Activated CD4-positive, alpha-beta T cell treated with anti-CD3 and anti-CD28 coated beads, Interleukin-2, amount 10 ng/mL, durations not matched to agents 24 days and 14 days (primary cell): ENCODE measurements at regions of chr1 and their contacts with region 1.

Region 1: DNA sequence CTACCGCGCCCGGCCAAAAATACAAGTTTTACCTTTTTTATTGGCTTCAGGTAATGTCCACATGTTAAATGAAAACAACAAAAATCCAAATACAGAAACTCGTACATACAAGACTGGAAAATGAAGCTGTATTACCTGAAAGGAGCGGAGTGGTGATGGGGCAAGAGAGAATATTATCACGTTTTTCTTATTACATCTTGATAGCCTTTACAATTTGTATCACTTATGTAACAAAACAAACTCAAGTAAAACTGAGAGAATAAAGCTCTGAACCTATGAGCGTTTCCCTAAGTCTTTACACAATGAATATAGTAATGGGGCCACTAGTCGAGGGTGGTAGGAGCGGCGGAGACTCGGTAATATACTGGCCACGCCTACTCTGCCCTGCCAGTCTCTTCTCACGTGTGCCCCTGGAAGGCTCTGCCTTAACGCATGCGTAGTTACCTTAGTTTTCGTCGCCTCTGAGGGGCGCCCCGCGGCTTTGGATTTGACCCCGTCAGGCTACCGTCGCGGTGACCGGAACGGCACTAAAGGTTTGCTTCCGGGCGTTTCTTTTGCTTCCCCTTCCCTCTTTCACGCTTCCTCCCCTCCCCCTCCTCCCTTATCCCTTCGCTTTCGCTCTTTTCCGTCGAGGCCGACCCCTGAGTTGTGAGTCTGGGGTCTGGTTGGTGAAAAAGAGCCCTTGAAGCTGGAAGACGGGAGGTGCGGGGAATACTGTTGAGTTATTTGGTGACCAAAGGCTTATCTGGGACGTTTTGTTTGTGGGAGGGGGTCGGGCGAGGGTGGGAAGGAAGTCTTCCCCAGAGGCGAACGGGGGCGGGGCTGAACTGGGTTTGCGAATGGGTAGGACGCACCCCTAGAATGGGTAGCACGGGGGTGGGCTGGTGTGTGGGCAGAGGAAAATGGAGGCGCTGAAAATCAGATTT is at the start of gene SETDB1:
- DNase-seq: peak; percentile 97
- H3K4me3 Mint-ChIP-seq: peak within 1 kb of the TSS; percentile 93
- H3K27ac Mint-ChIP-seq: peak within 1 kb of the TSS; percentile 97
- H3K4me1 Mint-ChIP-seq: peaks cover 28% of the 10 kb centered on the region
- H3K27me3 Mint-ChIP-seq: no peaks in the 10 kb centered on the region
- total RNA-seq, gene SETDB1: 56.2 and 62.3 TPM in 2 replicates

Region 2: GRCh38 chr1:150696590-150697524 is 229.2 kb before region 1 on chr1 and contains the start of gene GOLPH3L:
- intact Hi-C with region 1: loop called (anchors 2 kb)
- DNase-seq: peak; percentile 97
- H3K4me3 Mint-ChIP-seq: peak within 1 kb of the TSS; percentile 90
- H3K27ac Mint-ChIP-seq: peak within 1 kb of the TSS; percentile 92
- H3K4me1 Mint-ChIP-seq: peaks cover 19% of the 10 kb centered on the region
- H3K27me3 Mint-ChIP-seq: peaks cover 11% of the 10 kb centered on the region
- total RNA-seq, gene GOLPH3L: 19.6 and 19.8 TPM in 2 replicates

Region 3: DNA sequence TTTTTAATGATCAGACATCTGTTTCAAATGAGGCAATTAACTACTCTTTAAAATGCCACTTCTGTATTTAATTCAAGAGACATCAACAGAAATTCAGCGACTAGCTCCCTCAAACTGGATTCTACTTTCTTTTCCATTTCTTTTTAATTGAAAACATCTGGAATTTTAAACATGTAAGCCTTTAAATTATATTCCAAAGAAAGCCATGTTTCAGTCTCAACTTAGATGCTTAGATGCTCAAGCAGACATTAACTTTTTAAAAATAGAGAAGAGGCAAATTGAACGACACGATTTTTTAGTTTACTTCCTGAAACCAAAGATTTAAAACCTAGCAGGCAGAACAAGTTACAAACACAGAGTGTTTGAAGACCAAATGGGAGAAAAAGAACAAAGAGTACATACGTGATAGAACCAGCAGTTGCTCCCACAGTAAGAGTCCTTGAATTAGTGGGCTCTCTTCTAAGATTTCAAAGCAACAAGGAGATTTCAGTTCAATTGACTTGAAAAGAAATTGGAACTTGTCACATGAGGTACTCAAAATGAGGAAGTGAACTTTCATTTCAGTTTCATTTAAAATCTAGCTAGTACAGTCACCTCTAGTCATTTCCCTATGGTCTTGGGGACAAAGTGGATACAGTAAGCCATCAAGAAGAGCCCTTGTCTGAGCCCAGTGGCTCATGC is 160.6 kb before region 1 on chr1 and contains the start of gene CTSS:
- intact Hi-C with region 1: loop called (anchors 1 kb)
- DNase-seq: peak; percentile 70
- H3K4me3 Mint-ChIP-seq: peak within 1 kb of the TSS; percentile 83
- H3K27ac Mint-ChIP-seq: peak within 1 kb of the TSS; percentile 91
- H3K4me1 Mint-ChIP-seq: peaks cover 30% of the 10 kb centered on the region
- H3K27me3 Mint-ChIP-seq: no peaks in the 10 kb centered on the region
- total RNA-seq, gene CTSS: 26.9 and 28.3 TPM in 2 replicates

Region 4: DNA sequence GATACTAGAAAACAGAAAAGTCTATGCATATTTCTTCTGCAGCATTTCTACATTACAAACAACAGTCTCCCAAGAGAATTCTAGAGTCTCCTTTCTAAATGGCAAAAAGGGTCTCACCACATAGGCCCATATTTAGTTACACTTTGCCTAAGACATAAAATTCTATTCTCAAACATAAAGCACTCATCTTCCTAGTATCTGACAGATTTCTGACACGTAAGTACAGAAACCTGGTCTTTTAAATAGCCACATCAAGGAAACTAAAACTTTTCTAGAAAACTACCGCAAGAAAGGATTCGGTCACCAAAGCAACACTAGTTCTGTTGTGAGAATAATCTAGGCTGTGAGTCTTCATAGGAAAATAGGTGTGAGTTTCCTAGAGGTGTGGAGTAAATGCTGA is 84.5 kb before region 1 on chr1:
- intact Hi-C with region 1: loop called (anchors 1 kb)
- DNase-seq: peak; percentile 78
- H3K4me3 Mint-ChIP-seq: peak overlapping the region; percentile 35
- H3K27ac Mint-ChIP-seq: peak overlapping the region; percentile 65
- H3K4me1 Mint-ChIP-seq: peaks cover 32% of the 10 kb centered on the region
- H3K27me3 Mint-ChIP-seq: no peaks in the 10 kb centered on the region

Region 5: DNA sequence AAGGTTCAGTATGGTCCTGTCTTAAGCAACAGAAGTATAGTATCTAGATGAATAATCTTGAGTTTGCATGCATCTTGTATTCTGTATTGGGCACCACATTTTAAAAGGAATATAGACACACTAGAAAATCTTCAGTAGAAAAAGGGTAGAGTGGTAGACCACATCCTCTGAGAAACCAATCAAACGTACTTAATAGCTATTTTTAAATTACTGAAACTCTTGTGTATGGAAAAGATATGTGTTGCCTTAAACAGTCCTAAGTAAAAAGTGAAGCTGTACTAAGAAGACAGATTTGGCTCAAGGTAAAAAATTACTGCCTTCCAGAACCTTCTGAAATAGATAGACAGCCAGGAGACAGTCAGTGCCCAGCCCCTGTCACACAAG is 36.1 kb before region 1 on chr1:
- intact Hi-C with region 1: loop called (anchors 1 kb)
- DNase-seq: no peak
- H3K4me3 Mint-ChIP-seq: peak overlapping the region; percentile 39
- H3K27ac Mint-ChIP-seq: peak overlapping the region; percentile 81
- H3K4me1 Mint-ChIP-seq: peaks cover 22% of the 10 kb centered on the region
- H3K27me3 Mint-ChIP-seq: no peaks in the 10 kb centered on the region

Region 6: GRCh38 chr1:151485685-151486255 is 559.7 kb after region 1 on chr1:
- intact Hi-C with region 1: no loop called
- DNase-seq: no peak
- H3K4me3 Mint-ChIP-seq: no peak overlapping the region
- H3K27ac Mint-ChIP-seq: no peak overlapping the region
- H3K4me1 Mint-ChIP-seq: no peaks in the 10 kb centered on the region
- H3K27me3 Mint-ChIP-seq: no peaks in the 10 kb centered on the region